Activated B cell treated with CpG ODN at 0.5 μM for 24 hours (primary cell): ENCODE measurements at regions of chr5 and their contacts with region 1.

Region 1: GRCh38 chr5:15105796-15106393 is 234.3 kb upstream of the ANKH start:
- DNase-seq: no peak
- ATAC-seq: no peak
- H3K4me3 Mint-ChIP-seq: no peak overlapping the region
- H3K27ac Mint-ChIP-seq: no peak overlapping the region
- H3K4me1 Mint-ChIP-seq: no peaks in the 10 kb centered on the region
- H3K27me3 Mint-ChIP-seq: no peaks in the 10 kb centered on the region
- CTCF ChIP-seq: peak; percentile 37

Region 2: GRCh38 chr5:15116996-15117395 is 11.1 kb after region 1 on chr5:
- CTCF ChIA-PET with region 1: interaction called, 10 read pairs
- POLR2A ChIA-PET with region 1: no interaction called
- intact Hi-C with region 1: no loop called
- DNase-seq: no peak
- ATAC-seq: no peak
- H3K4me3 Mint-ChIP-seq: no peak overlapping the region
- H3K27ac Mint-ChIP-seq: no peak overlapping the region
- H3K4me1 Mint-ChIP-seq: no peaks in the 10 kb centered on the region
- H3K27me3 Mint-ChIP-seq: no peaks in the 10 kb centered on the region
- CTCF ChIP-seq: no peak

Region 3: GRCh38 chr5:15794052-15794985 is 688.4 kb after region 1 on chr5:
- CTCF ChIA-PET with region 1: no interaction called
- POLR2A ChIA-PET with region 1: no interaction called
- intact Hi-C with region 1: loop called (anchors 5 kb)
- DNase-seq: no peak
- ATAC-seq: no peak
- H3K4me3 Mint-ChIP-seq: no peak overlapping the region
- H3K27ac Mint-ChIP-seq: no peak overlapping the region
- H3K4me1 Mint-ChIP-seq: no peaks in the 10 kb centered on the region
- H3K27me3 Mint-ChIP-seq: no peaks in the 10 kb centered on the region
- CTCF ChIP-seq: no peak